SK-N-SH (cell line): ENCODE measurements at regions of chr7 and their contacts with region 1.

Region 1: GRCh38 chr7:157386979-157387800 is 50.4 kb downstream of the DNAJB6 start:
- DNase-seq: peak; percentile 86
- H3K4me3 ChIP-seq: no peak overlapping the region; a peak in 1 of 4 replicates
- H3K27ac ChIP-seq: peak overlapping the region; percentile 50 to 53
- H3K4me1 ChIP-seq: peaks cover 5% of the 10 kb centered on the region in 2 experiments; a peak in 3 of 4 replicates
- H3K27me3 ChIP-seq: no peaks in the 10 kb centered on the region
- CTCF ChIP-seq: peak; percentile 99
- EP300 ChIP-seq: no peak
- RAD21 ChIP-seq: peak; percentile 73

Region 2: DNA sequence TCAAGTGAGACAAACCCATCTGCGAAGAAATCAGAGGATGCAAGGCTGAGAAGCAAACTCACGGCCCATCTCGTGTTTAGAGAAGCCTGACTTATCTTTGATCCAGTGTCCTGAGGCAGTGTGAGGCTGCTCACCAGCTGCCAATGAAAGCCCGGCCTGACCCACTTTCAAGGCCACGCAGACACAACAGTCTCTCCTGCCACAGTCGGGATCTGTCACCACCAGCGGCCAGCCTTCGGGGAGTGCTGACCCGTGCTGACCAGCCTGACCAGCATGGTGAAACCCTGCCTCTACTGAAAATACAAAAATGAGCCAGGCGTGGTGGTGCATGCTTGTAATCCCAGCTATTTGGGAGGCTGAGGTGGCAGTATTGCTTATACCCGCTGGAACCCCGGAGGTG is 57.7 kb before region 1 on chr7:
- CTCF ChIA-PET with region 1: interaction called, 12 read pairs
- POLR2A ChIA-PET with region 1: no interaction called
- DNase-seq: peak; percentile 85
- H3K4me3 ChIP-seq: no peak overlapping the region
- H3K27ac ChIP-seq: peak overlapping the region in 1 of 2 experiments; percentile 64; a peak in 2 of 4 replicates
- H3K4me1 ChIP-seq: peaks cover 0 to 7% of the 10 kb centered on the region in 2 experiments; a peak in 1 of 4 replicates
- H3K27me3 ChIP-seq: no peaks in the 10 kb centered on the region
- CTCF ChIP-seq: no peak
- EP300 ChIP-seq: peak in 1 of 2 experiments; percentile 57; a peak in 2 of 4 replicates
- RAD21 ChIP-seq: no peak; the same call in 1 of the 2 replicates

Region 3: GRCh38 chr7:157357129-157358040 is 29.8 kb before region 1 on chr7:
- CTCF ChIA-PET with region 1: interaction called, 16 read pairs
- POLR2A ChIA-PET with region 1: no interaction called
- DNase-seq: no peak
- H3K4me3 ChIP-seq: no peak overlapping the region
- H3K27ac ChIP-seq: no peak overlapping the region; a peak in 1 of 4 replicates
- H3K4me1 ChIP-seq: peaks cover 13 to 36% of the 10 kb centered on the region in 2 experiments
- H3K27me3 ChIP-seq: no peaks in the 10 kb centered on the region
- CTCF ChIP-seq: no peak
- EP300 ChIP-seq: no peak
- RAD21 ChIP-seq: no peak

Region 4: GRCh38 chr7:157362729-157363128 is 24.5 kb before region 1 on chr7:
- CTCF ChIA-PET with region 1: interaction called, 16 read pairs
- POLR2A ChIA-PET with region 1: no interaction called
- DNase-seq: no peak
- H3K4me3 ChIP-seq: no peak overlapping the region
- H3K27ac ChIP-seq: no peak overlapping the region
- H3K4me1 ChIP-seq: peaks cover 0 to 4% of the 10 kb centered on the region in 2 experiments; a peak in 1 of 4 replicates
- H3K27me3 ChIP-seq: no peaks in the 10 kb centered on the region
- CTCF ChIP-seq: no peak
- EP300 ChIP-seq: no peak
- RAD21 ChIP-seq: no peak

Region 5: DNA sequence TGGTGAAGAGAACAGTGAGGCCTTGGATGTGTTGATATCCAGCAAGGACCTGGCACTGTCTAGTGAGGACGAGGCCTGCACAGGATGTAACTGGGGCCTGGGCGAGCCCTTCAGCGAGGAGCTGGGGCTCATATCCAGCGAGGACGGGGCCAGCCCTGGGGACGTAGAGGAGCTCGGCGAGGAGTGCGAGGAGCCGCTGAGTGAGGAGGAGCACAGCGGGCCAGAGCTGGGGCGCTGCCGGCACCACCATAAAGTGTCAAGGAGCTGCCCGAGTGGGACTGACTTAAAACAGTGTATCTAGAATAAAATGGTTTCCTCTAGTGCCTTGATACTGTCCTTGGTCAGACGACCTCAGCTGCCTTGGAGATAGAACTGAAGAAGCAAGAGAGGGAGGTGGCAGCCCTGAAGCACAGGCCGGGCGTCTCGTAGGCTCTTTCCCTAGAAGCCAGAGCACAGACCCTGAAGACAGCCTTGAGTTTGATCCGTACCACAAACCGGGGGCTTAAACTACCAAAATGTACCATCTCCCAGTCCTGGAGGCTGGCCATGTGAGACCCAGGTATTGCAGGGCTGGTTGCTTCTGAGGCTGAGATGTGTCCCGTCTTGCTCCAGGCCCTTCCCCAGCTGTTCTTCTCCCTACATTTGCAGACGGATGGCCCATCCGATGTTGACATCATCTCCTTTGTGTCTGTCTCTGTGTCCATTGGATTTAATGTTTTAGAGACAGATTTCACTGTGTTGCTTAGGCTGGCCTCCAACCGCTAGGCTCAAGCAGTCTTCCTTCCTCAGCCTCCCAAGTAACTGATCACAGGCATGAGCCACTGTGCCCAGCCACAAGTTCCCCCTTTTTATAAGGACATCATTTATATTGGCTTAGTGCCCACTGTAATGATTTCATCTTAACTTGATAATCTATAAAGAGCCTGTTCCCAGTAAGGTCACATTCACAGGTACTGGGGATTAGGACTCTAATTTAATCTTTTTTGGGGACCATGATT is 14.7 kb before region 1 on chr7:
- CTCF ChIA-PET with region 1: interaction called, 23 read pairs
- POLR2A ChIA-PET with region 1: no interaction called
- DNase-seq: no peak
- H3K4me3 ChIP-seq: no peak overlapping the region
- H3K27ac ChIP-seq: no peak overlapping the region; a peak in 1 of 4 replicates
- H3K4me1 ChIP-seq: no peaks in the 10 kb centered on the region; a peak in 1 of 4 replicates
- H3K27me3 ChIP-seq: no peaks in the 10 kb centered on the region
- CTCF ChIP-seq: no peak
- EP300 ChIP-seq: no peak
- RAD21 ChIP-seq: no peak

Region 6: GRCh38 chr7:157397731-157398691 is 10.8 kb after region 1 on chr7:
- CTCF ChIA-PET with region 1: interaction called, 90 read pairs
- POLR2A ChIA-PET with region 1: no interaction called
- DNase-seq: peak; percentile 86
- H3K4me3 ChIP-seq: peak overlapping the region in 1 of 2 experiments; percentile 17; a peak in 1 of 4 replicates
- H3K27ac ChIP-seq: peak overlapping the region; percentile 76 to 93
- H3K4me1 ChIP-seq: peaks cover 9 to 30% of the 10 kb centered on the region in 2 experiments; a peak in 3 of 4 replicates
- H3K27me3 ChIP-seq: no peaks in the 10 kb centered on the region
- CTCF ChIP-seq: peak; percentile 74
- EP300 ChIP-seq: peak; percentile 52 to 67; a peak in 2 of 4 replicates
- RAD21 ChIP-seq: peak; percentile 57

Region 7: GRCh38 chr7:157404845-157405481 is 17.8 kb after region 1 on chr7:
- CTCF ChIA-PET with region 1: interaction called, 90 read pairs
- POLR2A ChIA-PET with region 1: no interaction called
- DNase-seq: peak; percentile 82
- H3K4me3 ChIP-seq: no peak overlapping the region
- H3K27ac ChIP-seq: peak overlapping the region; percentile 5 to 12; a peak in 1 of 4 replicates
- H3K4me1 ChIP-seq: peaks cover 0 to 29% of the 10 kb centered on the region in 2 experiments; a peak in 2 of 4 replicates
- H3K27me3 ChIP-seq: no peaks in the 10 kb centered on the region
- CTCF ChIP-seq: no peak
- EP300 ChIP-seq: no peak; a peak in 1 of 4 replicates
- RAD21 ChIP-seq: no peak